Lower leg skin (tissue), 4 donors: ENCODE measurements at regions of chr19 and their contacts with region 1.

Region 1: DNA sequence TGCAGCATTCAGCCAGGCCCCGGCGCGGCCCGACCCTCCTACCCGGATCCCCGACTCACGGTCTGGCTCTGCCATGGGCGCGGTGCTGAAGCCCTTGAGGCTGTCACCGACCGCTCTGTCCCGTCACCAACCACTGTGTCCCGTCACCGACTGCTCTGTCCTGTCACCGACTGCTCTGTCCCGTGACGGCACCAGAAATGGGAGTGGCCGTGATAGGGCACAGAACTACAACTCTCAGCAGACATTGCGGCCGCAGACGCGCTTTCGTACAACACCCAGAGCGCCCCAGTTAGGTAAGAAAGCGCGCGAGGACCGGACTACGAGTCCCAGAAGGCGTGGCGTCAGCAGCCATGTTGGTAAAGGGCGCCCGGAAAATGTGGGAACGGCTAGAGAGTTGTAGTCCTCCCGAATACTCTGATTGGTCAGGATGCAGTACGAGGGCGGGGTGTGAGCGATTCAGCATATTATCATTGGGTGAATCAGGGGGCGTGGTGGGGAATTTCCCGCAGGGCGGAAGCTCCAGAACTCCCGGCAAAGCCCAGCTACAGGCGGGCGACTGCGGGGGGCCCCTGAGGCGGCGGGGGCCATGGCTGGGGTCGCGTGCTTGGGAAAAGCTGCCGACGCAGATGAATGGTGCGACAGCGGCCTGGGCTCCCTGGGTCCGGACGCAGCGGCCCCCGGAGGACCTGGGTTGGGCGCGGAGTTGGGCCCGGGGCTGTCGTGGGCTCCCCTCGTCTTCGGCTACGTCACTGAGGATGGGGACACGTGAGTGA is at the starts of genes NFKBIB and SIRT2:
- DNase-seq: peak; percentile 100
- H3K4me3 ChIP-seq: peak within 1 kb of the TSS; percentile 62
- CTCF ChIP-seq: no peak
- POLR2A ChIP-seq: peak in 1 of 2 donors; percentile 52
- total RNA-seq, gene NFKBIB: 26.9 to 51.2 (median 31.5) TPM
- total RNA-seq, gene SIRT2: 84.6 to 119 (median 101) TPM

Region 2: DNA sequence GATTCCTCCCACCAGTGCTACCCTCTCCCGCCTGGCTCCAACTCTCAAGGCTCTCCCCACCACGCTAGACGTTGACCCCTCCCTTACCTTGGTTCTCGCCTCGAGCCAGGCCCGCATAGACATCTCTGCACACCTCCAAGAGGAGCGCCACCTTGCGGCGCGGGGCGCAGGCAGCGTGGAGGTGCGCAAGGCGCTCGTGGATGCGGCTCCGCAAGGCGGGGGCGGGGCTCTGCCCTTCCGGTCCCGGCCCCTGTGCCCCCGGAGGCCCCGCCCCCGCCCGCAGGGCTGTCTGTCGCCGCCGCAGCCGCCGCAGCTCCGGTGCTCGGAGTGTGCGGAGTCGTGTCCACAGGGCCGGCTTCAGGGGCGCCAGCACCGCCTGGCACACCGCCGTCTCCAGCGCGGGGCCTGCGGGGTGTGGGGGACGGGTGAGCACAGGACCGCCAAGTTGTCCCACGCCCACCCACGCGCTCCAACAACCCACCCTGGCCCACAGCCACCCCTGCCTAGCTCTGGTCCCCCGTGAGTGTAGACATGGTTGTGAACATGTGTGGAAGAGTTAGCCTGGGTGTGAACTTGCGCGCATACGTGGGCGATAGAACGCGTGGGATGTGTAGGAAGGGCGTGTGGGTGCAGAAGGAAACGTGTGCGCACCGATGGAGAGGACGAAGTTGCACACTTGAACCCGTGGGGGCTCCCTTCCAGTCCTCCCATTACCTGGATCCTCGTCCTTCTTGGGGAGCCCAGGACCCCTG is 29.6 kb before region 1 on chr19:
- intact Hi-C with region 1: no loop called
- DNase-seq: peak; percentile 71 to 96
- H3K4me3 ChIP-seq: peak overlapping the region; percentile 4
- CTCF ChIP-seq: peak in 1 of 3 donors; percentile 41
- POLR2A ChIP-seq: no peak

Region 3: GRCh38 chr19:38975214-38975860 is 75.7 kb after region 1 on chr19 and contains the start of gene FBXO17:
- intact Hi-C with region 1: no loop called
- DNase-seq: peak; percentile 25 to 90
- H3K4me3 ChIP-seq: peak within 1 kb of the TSS; percentile 36
- CTCF ChIP-seq: no peak
- POLR2A ChIP-seq: no peak
- total RNA-seq, gene FBXO17: 13.2 to 46.5 (median 34.3) TPM

Region 4: GRCh38 chr19:39824143-39825092 is 924.8 kb after region 1 on chr19:
- intact Hi-C with region 1: loop called (anchors 5 kb)
- DNase-seq: peak; percentile 93 to 97
- H3K4me3 ChIP-seq: peak overlapping the region; percentile 45
- CTCF ChIP-seq: no peak
- POLR2A ChIP-seq: no peak